ENCODE measurements at regions of chr2 and their contacts with region 1.

Region 1: GRCh38 chr2:210445116-210445707 is 31.3 kb downstream of the LANCL1 start:
- DNase-seq: no peak
- H3K4me3 ChIP-seq: no peak overlapping the region
- CTCF ChIP-seq: peak; percentile 46

Region 2: GRCh38 chr2:210460322-210461227 is 15.4 kb after region 1 on chr2:
- CTCF ChIA-PET with region 1: interaction called, 23 read pairs
- POLR2A ChIA-PET with region 1: no interaction called
- DNase-seq: no peak
- H3K4me3 ChIP-seq: no peak overlapping the region
- CTCF ChIP-seq: no peak